ENCODE measurements at regions of chr1 and their contacts with region 1.

Region 1: GRCh38 chr1:118949315-118949714 is 38.8 kb downstream of the TBX15 start:
- DNase-seq: no peak
- ATAC-seq: no peak
- H3K4me3 ChIP-seq: no peak overlapping the region
- H3K27ac ChIP-seq: no peak overlapping the region
- H3K4me1 ChIP-seq: no peaks in the 10 kb centered on the region; a peak in 1 of 5 replicates
- H3K27me3 ChIP-seq: no peaks in the 10 kb centered on the region
- CTCF ChIP-seq: no peak
- EP300 ChIP-seq: no peak
- POLR2A ChIP-seq: no peak
- RAD21 ChIP-seq: no peak

Region 2: DNA sequence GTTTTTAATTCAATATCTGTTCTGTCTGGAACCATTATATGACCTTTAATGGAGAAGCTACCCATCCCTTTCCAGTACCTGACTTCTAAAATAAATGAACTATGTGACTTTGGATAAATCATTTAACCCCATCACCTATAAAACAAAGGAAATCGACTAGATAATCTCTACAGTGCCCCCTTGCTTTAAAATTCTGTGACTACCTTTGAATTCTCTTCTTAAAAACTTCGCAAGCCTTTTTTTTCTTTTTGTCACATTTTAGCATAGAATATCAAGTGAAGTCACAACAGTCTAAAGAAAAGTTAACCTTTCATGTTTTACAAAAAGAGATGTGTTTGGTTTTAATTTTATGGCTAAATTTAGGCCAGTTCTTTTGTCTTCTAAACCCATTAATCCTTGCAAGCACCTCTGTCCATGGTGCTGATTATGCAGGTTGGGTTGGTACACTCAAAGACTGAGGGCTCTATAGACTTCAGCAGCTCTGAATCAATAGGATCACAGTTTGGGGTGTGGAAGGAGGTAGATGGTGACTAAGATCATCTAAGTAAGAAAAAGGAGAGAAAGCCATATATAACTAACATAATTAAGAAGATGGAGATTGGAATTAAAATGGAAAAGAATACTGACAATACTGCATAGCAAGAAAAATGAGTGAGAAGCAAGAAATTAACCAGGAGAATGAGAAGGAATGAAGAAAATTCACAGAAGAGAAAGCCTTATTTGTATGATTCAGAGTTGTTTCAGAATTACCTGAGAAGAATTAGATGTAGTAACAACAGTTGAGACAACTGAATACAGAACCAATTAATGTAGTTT is 20.4 kb before region 1 on chr1:
- CTCF ChIA-PET with region 1: no interaction called
- POLR2A ChIA-PET with region 1: no interaction called
- in situ Hi-C with region 1: no loop called
- intact Hi-C with region 1: no loop called
- DNase-seq: peak; percentile 18 to 50 (median 25)
- ATAC-seq: 0 out of 3 replicates have a peak, but pooled peaks have one; percentile 46
- H3K4me3 ChIP-seq: no peak overlapping the region
- H3K27ac ChIP-seq: no peak overlapping the region
- H3K4me1 ChIP-seq: no peaks in the 10 kb centered on the region
- H3K27me3 ChIP-seq: no peaks in the 10 kb centered on the region
- CTCF ChIP-seq: no peak
- EP300 ChIP-seq: no peak
- POLR2A ChIP-seq: no peak
- RAD21 ChIP-seq: no peak; a peak in 1 of 4 replicates

Region 3: DNA sequence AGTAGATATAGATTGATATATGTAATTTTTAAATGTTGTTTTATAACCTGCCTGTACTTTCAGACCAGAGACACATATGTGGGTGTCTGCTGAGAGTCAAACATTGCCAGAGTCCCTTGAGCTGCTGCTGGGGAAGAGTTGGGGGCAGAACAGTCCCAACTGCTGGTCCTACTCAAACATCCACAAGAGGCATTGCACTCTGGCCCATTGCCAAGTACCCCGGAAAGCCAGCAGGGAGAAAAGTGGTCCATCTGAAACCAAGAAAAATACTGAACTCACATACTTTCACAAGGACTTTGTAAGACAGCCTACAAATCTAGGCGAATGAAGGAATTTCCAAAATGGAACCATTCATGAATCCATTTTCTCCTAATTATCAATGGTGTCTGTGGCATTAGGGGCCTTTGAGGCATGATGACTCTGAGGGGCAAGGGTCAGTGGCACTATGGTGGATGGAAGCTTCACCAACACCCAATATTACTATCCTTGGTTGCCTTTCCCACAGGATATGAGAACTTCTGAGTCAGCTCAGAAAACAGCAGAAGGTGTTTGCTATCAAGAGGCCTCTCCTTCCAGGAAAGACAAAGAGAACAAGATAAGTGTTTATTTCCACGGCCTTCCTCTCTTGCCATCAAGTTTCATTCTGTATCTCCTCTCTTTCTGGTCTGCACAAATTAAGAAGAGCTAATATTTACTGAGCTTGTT is 46.1 kb after region 1 on chr1:
- CTCF ChIA-PET with region 1: no interaction called
- POLR2A ChIA-PET with region 1: no interaction called
- in situ Hi-C with region 1: no loop called
- intact Hi-C with region 1: loop called (anchors 5 kb)
- DNase-seq: no peak
- ATAC-seq: no peak
- H3K4me3 ChIP-seq: no peak overlapping the region
- H3K27ac ChIP-seq: no peak overlapping the region
- H3K4me1 ChIP-seq: peaks cover 0 to 6% of the 10 kb centered on the region in 2 experiments; a peak in 3 of 5 replicates
- H3K27me3 ChIP-seq: peaks cover 32 to 58% of the 10 kb centered on the region in 2 experiments
- CTCF ChIP-seq: no peak
- EP300 ChIP-seq: no peak
- POLR2A ChIP-seq: no peak
- RAD21 ChIP-seq: no peak

Measured in K562 (cell line).